Endothelial cell of umbilical vein (primary cell): ENCODE measurements at regions of chr20 and their contacts with region 1.

Region 1: DNA sequence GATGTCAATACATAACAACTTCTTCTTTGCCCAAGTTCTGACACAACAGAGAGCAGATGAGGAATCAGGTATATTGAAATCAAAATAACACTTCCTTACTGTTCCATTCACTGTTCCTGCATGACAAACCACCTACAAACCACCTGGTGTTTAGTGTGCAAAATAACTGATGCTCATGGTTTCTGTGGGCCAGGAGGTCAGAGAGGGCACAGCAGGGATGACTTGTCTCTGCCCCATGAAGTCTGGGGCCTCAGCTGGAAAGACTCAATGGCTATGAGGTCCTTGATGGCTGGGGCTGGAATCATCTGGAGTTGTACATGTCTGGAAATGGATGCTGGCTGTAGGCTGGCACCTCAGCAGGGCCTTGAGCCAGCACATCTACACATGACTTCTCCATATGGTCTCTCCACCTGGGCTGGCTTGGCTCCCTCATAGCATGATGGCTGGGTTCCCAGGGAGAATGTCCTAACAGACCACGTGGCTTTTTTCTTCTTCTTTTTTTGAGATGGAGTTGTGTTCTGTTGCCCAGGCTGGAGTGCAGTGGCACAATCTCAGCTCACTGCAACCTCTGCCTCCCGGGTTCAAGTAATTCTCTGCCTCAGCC is 7.4 kb upstream of the COX4I2 start:
- DNase-seq: no peak
- H3K4me3 ChIP-seq: no peak overlapping the region
- H3K27ac ChIP-seq: no peak overlapping the region
- H3K4me1 ChIP-seq: no peaks in the 10 kb centered on the region
- H3K27me3 ChIP-seq: no peaks in the 10 kb centered on the region
- CTCF ChIP-seq: no peak
- POLR2A ChIP-seq: no peak

Region 2: DNA sequence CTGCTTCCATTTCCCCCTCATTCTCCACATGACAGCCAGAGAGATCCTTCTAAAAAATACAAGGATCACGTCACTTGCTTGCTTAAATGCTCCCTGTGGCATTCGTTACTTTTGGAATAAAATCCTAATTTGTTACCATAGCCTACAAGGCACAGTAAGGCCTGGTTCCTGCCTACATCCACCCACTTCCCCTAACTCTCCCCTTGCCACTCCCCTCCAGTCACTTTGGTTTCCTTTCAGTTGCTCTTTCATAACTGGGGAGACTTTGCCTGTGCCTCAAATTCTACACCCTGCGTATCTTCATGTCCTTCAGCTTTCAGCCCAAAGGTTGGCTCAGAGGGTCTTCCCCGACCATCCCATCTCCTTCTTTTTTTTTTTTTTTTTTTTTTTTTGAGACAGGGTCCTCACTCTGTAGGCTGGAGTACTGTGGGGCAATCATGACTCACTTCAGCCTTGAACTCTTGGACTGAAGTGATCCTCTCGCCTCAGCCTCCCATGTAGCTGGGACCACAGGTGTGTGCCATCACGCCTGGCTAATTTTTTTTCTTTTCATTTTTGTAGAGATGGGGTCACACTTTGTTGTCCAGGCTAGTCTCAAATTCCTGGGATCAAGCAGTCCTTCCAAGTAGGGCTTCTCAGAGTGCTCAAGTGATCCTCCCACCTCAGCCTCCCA is 12.7 kb before region 1 on chr20:
- CTCF ChIA-PET with region 1: interaction called, 33 read pairs
- POLR2A ChIA-PET with region 1: no interaction called
- dilution Hi-C with region 1: no loop called
- intact Hi-C with region 1: no loop called
- DNase-seq: no peak
- H3K4me3 ChIP-seq: no peak overlapping the region
- H3K27ac ChIP-seq: no peak overlapping the region
- H3K4me1 ChIP-seq: peaks cover 4% of the 10 kb centered on the region
- H3K27me3 ChIP-seq: no peaks in the 10 kb centered on the region
- CTCF ChIP-seq: no peak
- POLR2A ChIP-seq: no peak

Region 3: DNA sequence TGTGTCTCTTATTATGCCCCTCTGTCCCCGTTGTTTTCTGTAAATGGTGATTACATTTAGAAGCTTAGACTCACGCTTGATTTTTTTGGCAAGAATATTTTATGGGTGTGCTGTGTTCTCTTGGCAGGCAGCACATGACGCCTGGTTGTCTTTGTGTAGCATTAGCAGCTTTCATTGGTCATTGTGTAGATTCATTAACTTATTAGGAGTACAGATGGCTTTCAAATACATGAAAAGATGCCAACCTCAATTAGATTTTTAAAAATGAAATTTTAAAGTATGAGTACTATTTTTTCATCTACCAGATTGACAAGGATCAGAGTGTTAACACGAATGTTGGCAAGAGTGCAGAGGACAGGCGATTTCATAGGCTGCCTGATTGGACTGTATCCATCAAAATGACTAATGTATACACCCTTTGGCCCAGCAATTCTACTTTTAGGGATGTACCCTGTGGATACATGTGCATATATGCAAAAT is 22.7 kb after region 1 on chr20:
- CTCF ChIA-PET with region 1: interaction called, 50 read pairs
- POLR2A ChIA-PET with region 1: interaction called, 8 read pairs
- dilution Hi-C with region 1: no loop called
- intact Hi-C with region 1: no loop called
- DNase-seq: peak; percentile 20
- H3K4me3 ChIP-seq: no peak overlapping the region
- H3K27ac ChIP-seq: no peak overlapping the region
- H3K4me1 ChIP-seq: no peaks in the 10 kb centered on the region
- H3K27me3 ChIP-seq: peaks cover 0 to 1% of the 10 kb centered on the region in 2 experiments
- CTCF ChIP-seq: no peak
- POLR2A ChIP-seq: no peak

Region 4: DNA sequence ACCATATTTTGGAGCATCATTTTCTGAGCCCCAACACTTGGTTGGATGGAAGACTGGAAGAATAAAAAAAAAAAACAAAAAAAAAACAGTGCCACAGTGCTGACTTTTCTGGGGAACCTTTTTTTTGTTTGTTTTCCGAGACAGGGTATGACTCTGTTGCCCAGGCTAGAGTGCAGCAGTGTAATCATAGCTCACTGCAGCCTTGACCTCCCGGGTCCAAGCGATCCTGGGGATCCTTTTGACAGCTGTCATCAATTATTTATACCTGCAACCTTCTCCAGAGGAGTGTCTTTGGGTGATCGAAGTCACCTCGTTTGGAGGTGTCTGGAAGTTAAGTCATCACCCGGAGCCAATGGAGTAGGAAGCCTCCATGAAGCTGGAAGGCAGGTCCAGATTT is 101.0 kb after region 1 on chr20:
- CTCF ChIA-PET with region 1: interaction called, 32 read pairs
- POLR2A ChIA-PET with region 1: no interaction called
- dilution Hi-C with region 1: no loop called
- intact Hi-C with region 1: no loop called
- DNase-seq: no peak
- H3K4me3 ChIP-seq: no peak overlapping the region
- H3K27ac ChIP-seq: no peak overlapping the region
- H3K4me1 ChIP-seq: no peaks in the 10 kb centered on the region
- H3K27me3 ChIP-seq: no peaks in the 10 kb centered on the region
- CTCF ChIP-seq: no peak
- POLR2A ChIP-seq: no peak